Activated T-helper 1 cell treated with anti-CD3 and anti-CD28 coated beads, Interleukin-12 subunit alpha, Interleukin-12 subunit beta, Interleukin-2, Interleukin-4 antibody, amounts not matched to agents 30 ng/mL and 10 ng/mL and 1 ng/mL, durations not matched to agents 14 hours and 24 hours and 36 hours (primary cell): ENCODE measurements at regions of chr19 and their contacts with region 1.

Region 1: GRCh38 chr19:53467485-53468262 is at the start of gene ZNF813:
- DNase-seq: peak; percentile 89
- H3K4me3 Mint-ChIP-seq: peak within 1 kb of the TSS; percentile 89
- H3K27ac Mint-ChIP-seq: peak within 1 kb of the TSS; percentile 68
- H3K4me1 Mint-ChIP-seq: peaks cover 13% of the 10 kb centered on the region
- H3K27me3 Mint-ChIP-seq: peaks cover 4% of the 10 kb centered on the region
- total RNA-seq, gene ZNF813: 3.7 and 4.3 TPM in 2 replicates

Region 2: DNA sequence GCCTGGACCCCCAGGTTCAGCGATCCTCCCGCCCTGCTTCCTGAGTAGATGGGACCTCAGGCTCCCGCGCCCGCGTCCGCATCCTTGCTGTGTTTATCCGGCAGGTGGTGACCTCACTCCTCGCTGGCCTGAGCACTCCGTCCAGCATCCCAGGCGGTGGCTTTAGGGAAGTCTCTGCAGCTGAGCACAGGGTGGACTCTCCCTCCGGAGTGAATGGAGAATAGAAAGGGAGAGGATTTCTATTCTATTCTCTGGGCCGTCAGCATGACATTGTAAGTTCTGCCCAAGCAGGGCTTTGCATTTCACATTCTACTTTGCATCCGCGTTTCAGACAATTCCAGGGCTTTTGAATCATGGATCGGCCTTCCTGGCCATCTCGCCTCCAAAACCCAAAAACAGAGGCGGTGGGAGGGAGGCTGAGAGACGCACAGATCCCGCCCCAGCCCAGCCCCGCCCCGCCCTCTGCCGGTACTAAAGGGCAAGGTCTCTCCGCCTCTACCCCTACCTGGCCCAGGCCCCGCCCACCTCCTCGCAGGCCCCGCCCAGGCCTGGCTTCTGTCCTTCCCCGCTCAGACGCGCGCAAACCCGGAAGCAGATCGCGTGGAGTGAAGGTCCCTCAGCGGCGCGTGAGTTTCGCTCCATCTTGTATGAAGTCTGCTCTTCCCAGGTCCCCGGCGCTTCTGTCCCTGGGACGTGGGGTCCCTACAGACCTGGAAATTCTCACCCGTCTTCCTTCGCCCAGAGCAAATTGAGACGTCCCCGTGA is 102.4 kb before region 1 on chr19 and contains the start of gene ZNF525:
- intact Hi-C with region 1: loop called (anchors 1 kb)
- DNase-seq: peak; percentile 93
- H3K4me3 Mint-ChIP-seq: peak within 1 kb of the TSS; percentile 93
- H3K27ac Mint-ChIP-seq: peak within 1 kb of the TSS; percentile 91
- H3K4me1 Mint-ChIP-seq: peaks cover 17% of the 10 kb centered on the region
- H3K27me3 Mint-ChIP-seq: no peaks in the 10 kb centered on the region
- total RNA-seq, gene ZNF525: 16.5 and 19.0 TPM in 2 replicates

Region 3: GRCh38 chr19:53394974-53395839 is 72.5 kb before region 1 on chr19 and contains the start of gene ZNF765:
- intact Hi-C with region 1: loop called (anchors 1 kb)
- DNase-seq: peak; percentile 93
- H3K4me3 Mint-ChIP-seq: peak within 1 kb of the TSS; percentile 98
- H3K27ac Mint-ChIP-seq: peak within 1 kb of the TSS; percentile 85
- H3K4me1 Mint-ChIP-seq: peaks cover 27% of the 10 kb centered on the region
- H3K27me3 Mint-ChIP-seq: no peaks in the 10 kb centered on the region
- total RNA-seq, gene ZNF765: 9.2 and 10.8 TPM in 2 replicates

Region 4: GRCh38 chr19:53537480-53538383 is 70.1 kb after region 1 on chr19 and contains the start of gene ZNF331:
- intact Hi-C with region 1: loop called (anchors 5 kb)
- DNase-seq: peak; percentile 84
- H3K4me3 Mint-ChIP-seq: peak within 1 kb of the TSS; percentile 96
- H3K27ac Mint-ChIP-seq: peak within 1 kb of the TSS; percentile 97
- H3K4me1 Mint-ChIP-seq: no peaks in the 10 kb centered on the region
- H3K27me3 Mint-ChIP-seq: no peaks in the 10 kb centered on the region
- total RNA-seq, gene ZNF331: 17.9 and 19.6 TPM in 2 replicates